Head of caudate nucleus (tissue), 42 donors: ENCODE measurements at regions of chr22 and their contacts with region 1.

Region 1: DNA sequence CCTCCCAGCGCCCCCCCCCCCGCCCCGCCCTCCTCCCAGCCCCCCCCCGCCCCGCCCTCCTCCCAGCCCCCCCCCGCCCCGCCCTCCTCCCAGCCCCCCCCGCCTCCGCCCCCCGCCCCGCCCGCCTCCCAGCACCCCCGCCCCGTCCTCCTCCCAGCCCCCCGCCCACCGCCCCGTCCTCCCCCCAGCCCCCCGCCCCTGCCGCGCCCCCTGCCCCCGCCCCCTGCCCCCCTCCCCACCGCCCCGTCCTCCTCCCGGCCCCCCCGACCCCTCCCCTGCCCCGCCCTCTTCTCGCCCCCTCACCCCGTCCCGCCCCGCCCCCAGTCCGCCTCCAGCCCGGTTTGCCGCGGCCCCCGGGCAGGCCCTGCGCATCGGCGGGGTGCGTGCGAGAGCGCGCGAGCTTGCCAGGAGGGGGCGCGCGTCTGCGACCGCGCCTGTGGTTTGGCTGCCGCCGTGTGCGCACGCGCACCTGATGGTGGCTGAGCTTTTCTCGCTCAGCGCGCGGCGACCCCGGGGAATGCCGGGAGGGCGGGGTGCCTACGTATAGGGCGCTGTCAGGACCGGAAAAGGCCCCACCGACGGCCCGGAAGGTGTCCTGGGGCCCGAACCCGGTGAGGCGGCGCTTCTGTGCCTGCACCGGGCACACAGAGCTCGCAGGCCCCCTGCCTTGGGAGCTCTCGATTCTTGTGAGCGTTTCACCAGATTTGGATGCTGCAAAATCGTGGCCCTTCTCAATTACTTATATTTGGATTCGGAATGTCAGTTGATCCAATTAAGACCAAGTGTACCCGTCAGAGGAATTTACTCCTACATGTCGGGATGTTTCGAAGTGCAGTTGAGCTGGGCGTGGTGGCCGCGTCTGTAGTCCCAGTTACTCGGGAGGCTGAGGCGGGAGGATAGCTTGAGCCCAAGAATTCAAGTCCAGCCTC is 501 bp upstream of the TTLL12 start:
- DNase-seq: peak; percentile 87 to 98 (median 95)

Region 2: DNA sequence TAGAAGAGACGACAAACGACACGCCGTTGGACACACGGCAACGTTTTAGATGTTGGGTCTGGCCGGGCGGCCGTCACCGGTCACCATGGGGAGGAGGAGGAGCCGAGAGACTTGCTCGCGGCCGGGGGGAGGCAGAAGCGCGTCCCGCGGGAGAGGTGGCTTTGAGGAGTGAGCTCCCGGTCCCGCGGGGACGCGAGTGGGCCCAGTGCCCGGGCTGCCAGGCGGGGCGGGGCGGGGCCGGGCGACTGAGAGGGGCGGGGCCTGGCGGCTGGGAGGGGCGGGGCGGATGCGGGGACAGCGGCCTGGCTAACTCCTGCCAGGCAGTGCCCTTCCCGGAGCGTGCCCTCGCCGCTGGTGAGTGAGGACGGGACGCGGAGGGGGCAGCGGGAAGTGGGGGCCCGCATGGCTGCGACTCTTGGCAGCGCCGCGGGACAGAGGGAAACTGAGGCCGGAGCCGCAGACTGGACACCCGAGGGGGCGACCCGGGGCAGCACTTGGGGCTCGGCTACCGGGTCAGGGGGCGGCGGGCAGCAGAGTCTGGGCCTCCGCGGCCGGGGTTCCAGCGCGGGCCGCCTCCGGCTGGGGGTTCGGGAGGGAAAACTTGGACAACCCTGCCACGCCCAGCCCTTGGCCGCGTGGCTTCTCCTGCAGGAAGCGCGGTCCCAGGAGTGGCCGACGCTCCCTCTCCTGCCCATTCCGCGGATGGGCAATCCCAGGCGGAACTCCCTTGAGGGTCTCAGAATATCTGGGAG is 36.0 kb before region 1 on chr22 and contains the start of gene TSPO:
- intact Hi-C with region 1: loop called (anchors 5 kb)
- DNase-seq: peak; percentile 34 to 91 (median 83)